B cell (primary cell): ENCODE measurements at regions of chr12 and their contacts with region 1.

Region 1: DNA sequence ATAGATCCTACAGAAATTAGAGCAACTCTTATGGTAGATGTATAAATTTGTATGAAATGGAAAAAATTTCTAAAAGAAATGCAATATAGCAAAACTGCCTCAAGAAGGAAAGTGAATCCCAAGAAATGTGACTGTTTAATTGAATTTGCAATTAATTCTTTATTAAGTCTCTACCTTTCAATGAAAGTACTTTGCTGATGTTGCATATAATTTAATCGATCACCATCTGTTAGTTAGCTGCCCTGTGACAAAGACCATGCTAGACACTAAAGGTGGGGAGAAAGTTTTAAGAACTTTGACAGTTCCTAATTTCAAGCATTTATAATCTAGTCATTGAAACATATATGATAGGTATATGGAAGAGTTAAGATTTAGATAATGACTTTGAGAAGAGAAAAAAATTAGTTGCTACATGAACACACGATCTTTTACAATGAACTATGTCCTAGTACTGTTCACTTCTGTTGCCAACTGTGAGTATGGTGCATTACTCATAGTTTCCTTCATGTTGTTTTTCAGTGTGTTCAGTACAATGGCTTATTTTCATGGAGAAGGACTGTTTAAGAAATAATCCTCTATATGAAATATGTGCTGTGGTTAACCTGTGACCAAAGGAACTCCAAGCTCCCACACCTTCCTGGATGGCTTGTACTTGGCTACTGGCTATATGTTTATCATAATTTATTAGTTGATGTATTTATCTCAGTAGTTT is 128.4 kb downstream of the METTL25 start:
- DNase-seq: no peak
- ATAC-seq: no peak
- H3K4me3 ChIP-seq: no peak overlapping the region
- H3K4me3 Mint-ChIP-seq: no peak overlapping the region
- H3K27ac ChIP-seq: no peak overlapping the region
- H3K27ac Mint-ChIP-seq: no peak overlapping the region
- H3K4me1 ChIP-seq: no peaks in the 10 kb centered on the region
- H3K4me1 Mint-ChIP-seq: no peaks in the 10 kb centered on the region
- H3K27me3 ChIP-seq: no peaks in the 10 kb centered on the region
- H3K27me3 Mint-ChIP-seq: no peaks in the 10 kb centered on the region
- CTCF ChIP-seq: no peak

Region 2: GRCh38 chr12:82593901-82594396 is 107.3 kb after region 1 on chr12:
- CTCF ChIA-PET with region 1: no interaction called
- POLR2A ChIA-PET with region 1: no interaction called
- intact Hi-C with region 1: no loop called
- DNase-seq: no peak
- ATAC-seq: no peak
- H3K4me3 ChIP-seq: no peak overlapping the region
- H3K4me3 Mint-ChIP-seq: no peak overlapping the region
- H3K27ac ChIP-seq: no peak overlapping the region
- H3K27ac Mint-ChIP-seq: no peak overlapping the region
- H3K4me1 ChIP-seq: no peaks in the 10 kb centered on the region
- H3K4me1 Mint-ChIP-seq: no peaks in the 10 kb centered on the region
- H3K27me3 ChIP-seq: no peaks in the 10 kb centered on the region
- H3K27me3 Mint-ChIP-seq: no peaks in the 10 kb centered on the region
- CTCF ChIP-seq: no peak

Region 3: DNA sequence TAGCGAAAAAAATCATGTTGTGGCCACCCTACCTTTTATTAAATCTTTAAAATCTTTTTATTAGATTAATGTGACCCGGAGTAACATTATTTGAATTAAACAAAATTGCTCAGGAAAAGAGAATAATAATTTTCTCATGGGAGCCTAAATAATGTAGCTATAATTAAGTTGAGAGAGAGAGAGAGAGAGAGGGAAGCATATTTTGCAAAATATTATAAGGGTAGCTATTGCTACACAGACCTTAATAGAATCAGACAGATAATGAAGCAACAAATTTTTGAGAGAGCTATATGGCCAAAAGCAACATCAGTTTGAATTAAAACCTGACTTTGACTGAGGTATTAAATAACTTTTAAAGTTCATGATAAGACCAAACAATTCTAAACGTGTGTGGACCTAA is 903.5 kb after region 1 on chr12:
- CTCF ChIA-PET with region 1: no interaction called
- POLR2A ChIA-PET with region 1: no interaction called
- intact Hi-C with region 1: loop called (anchors 10 kb)
- DNase-seq: no peak
- ATAC-seq: no peak
- H3K4me3 ChIP-seq: no peak overlapping the region
- H3K4me3 Mint-ChIP-seq: no peak overlapping the region
- H3K27ac ChIP-seq: no peak overlapping the region
- H3K27ac Mint-ChIP-seq: no peak overlapping the region
- H3K4me1 ChIP-seq: no peaks in the 10 kb centered on the region
- H3K4me1 Mint-ChIP-seq: no peaks in the 10 kb centered on the region
- H3K27me3 ChIP-seq: no peaks in the 10 kb centered on the region
- H3K27me3 Mint-ChIP-seq: no peaks in the 10 kb centered on the region
- CTCF ChIP-seq: no peak